IMR-90 (cell line): ENCODE measurements at regions of chr11 and their contacts with region 1.

Region 1: DNA sequence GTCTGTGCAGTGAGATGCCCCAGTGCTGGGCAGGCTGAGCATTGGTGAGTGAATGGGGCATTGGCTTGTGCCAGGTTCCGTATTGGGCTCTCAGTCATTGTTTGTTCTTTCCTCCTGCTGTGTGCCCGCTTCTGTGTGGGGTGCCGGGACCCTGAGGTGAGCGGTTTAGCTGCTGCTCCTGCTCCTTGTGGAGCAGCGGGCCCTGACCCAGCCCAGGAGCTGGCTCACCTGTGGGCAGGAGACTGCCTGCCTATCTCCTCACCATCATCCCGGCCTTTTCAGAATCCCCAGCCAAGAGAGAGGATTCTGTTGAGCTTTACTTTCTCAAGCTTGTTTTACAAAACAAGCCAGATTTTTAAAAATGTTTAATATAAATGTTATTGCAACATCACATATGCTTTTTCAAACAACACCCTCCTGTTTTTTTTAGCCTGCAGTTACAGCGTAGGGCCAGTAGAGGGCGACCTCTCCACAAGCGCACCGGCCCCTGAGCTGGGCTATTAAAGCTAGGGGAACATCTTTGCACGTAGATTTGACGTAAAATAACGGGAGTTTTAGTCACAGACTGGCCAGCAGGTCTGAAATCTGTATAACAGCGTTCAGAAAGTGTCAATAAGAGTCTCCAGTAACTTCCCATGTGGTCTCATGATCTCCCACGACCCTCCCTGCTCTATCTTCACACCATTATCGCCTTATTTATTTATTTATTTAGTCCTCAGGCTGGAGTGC is 25.1 kb upstream of the RELT start:
- DNase-seq: peak; percentile 84
- ATAC-seq: peak; percentile 94
- H3K4me3 ChIP-seq: no peak overlapping the region
- H3K27ac ChIP-seq: peak overlapping the region; percentile 63; the same call in 1 of the 2 replicates
- H3K4me1 ChIP-seq: peaks cover 8% of the 10 kb centered on the region; the same call in 1 of the 2 replicates
- H3K27me3 ChIP-seq: no peaks in the 10 kb centered on the region
- CTCF ChIP-seq: peak; percentile 94
- POLR2A ChIP-seq: no peak
- RAD21 ChIP-seq: peak; percentile 74

Region 2: GRCh38 chr11:73288873-73289707 is 62.0 kb before region 1 on chr11:
- CTCF ChIA-PET with region 1: no interaction called
- POLR2A ChIA-PET with region 1: no interaction called
- dilution Hi-C with region 1: no loop called
- in situ Hi-C with region 1: no loop called
- intact Hi-C with region 1: no loop called
- DNase-seq: peak; percentile 65
- ATAC-seq: peak; percentile 98
- H3K4me3 ChIP-seq: no peak overlapping the region
- H3K27ac ChIP-seq: peak overlapping the region; percentile 1; the same call in 1 of the 2 replicates
- H3K4me1 ChIP-seq: peaks cover 8% of the 10 kb centered on the region
- H3K27me3 ChIP-seq: no peaks in the 10 kb centered on the region
- CTCF ChIP-seq: peak; percentile 99
- POLR2A ChIP-seq: peak; percentile 50; the same call in 1 of the 2 replicates
- RAD21 ChIP-seq: peak; percentile 100

Region 3: GRCh38 chr11:73335204-73335923 is 15.7 kb before region 1 on chr11:
- CTCF ChIA-PET with region 1: interaction called, 14 read pairs
- POLR2A ChIA-PET with region 1: no interaction called
- dilution Hi-C with region 1: no loop called
- in situ Hi-C with region 1: no loop called
- intact Hi-C with region 1: no loop called
- DNase-seq: peak; percentile 82
- ATAC-seq: peak; percentile 67
- H3K4me3 ChIP-seq: no peak overlapping the region
- H3K27ac ChIP-seq: peak overlapping the region; percentile 70
- H3K4me1 ChIP-seq: peaks cover 49% of the 10 kb centered on the region
- H3K27me3 ChIP-seq: no peaks in the 10 kb centered on the region
- CTCF ChIP-seq: peak; percentile 99
- POLR2A ChIP-seq: 0 out of 2 replicates have a peak, but pooled peaks have one; percentile 55
- RAD21 ChIP-seq: peak; percentile 99

Region 4: GRCh38 chr11:73393479-73394380 is 42.7 kb after region 1 on chr11:
- CTCF ChIA-PET with region 1: interaction called, 16 read pairs
- POLR2A ChIA-PET with region 1: no interaction called
- dilution Hi-C with region 1: no loop called
- in situ Hi-C with region 1: no loop called
- intact Hi-C with region 1: loop called (anchors 1 kb)
- DNase-seq: peak; percentile 82
- ATAC-seq: peak; percentile 95
- H3K4me3 ChIP-seq: no peak overlapping the region
- H3K27ac ChIP-seq: no peak overlapping the region
- H3K4me1 ChIP-seq: no peaks in the 10 kb centered on the region
- H3K27me3 ChIP-seq: no peaks in the 10 kb centered on the region
- CTCF ChIP-seq: peak; percentile 81
- POLR2A ChIP-seq: no peak
- RAD21 ChIP-seq: peak; percentile 82